ENCODE measurements at regions of chr19 and their contacts with region 1.

Region 1: DNA sequence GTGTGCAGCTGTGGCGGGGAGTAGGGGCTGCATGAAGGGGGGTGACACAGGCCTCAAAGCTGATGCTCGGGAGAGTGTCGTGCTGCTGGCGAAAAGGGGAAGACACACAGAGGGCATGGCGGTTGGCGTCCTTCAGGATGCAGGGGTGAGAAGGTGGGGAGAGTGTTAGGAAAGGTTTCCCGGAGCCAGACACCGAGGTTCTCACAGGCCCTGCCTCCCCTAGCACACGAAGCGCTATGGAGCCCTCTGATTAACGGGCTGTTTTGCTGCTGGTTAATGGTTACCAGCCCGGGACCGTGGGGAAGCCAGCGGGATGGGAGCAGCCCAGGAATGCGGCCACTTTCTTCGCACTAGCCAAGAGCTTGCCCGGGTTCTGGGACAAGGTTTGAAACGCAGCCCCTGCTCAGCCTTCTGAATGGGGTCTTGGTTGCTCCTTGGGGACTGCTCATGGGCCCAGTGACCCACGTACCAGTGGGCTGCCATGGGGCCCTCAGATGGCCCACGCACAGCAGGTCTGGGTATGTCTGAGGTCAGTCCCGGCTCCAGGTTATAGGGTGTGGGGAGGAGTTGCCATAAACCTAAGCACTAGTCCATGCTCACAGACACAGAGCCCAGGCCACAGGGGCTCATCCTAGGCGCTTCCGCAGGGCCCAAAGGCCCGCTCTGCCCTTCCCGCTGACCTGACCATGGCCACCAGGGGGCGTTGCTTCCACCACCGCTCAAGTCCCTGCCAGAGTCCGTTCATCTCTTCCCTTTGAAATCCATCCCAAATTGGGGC is 31.3 kb upstream of the ISYNA1 start:
- DNase-seq: no peak
- H3K4me3 ChIP-seq: no peak overlapping the region
- H3K27ac ChIP-seq: peak overlapping the region; percentile 74
- H3K4me1 ChIP-seq: peaks cover 70% of the 10 kb centered on the region
- H3K27me3 ChIP-seq: no peaks in the 10 kb centered on the region
- CTCF ChIP-seq: peak; percentile 28 to 69 (median 58)
- POLR2A ChIP-seq: no peak

Region 2: GRCh38 chr19:18521885-18522624 is 52.8 kb after region 1 on chr19 and contains the start of gene ELL:
- intact Hi-C with region 1: loop called (anchors 10 kb)
- DNase-seq: peak; percentile 100
- H3K4me3 ChIP-seq: peak within 1 kb of the TSS; percentile 95 to 100
- H3K27ac ChIP-seq: peak within 1 kb of the TSS; percentile 99
- H3K4me1 ChIP-seq: peaks cover 37% of the 10 kb centered on the region
- H3K27me3 ChIP-seq: no peaks in the 10 kb centered on the region
- CTCF ChIP-seq: no peak
- POLR2A ChIP-seq: peak in 1 of 2 donors; percentile 95
- total RNA-seq, gene ELL: 25.3 TPM

Region 3: GRCh38 chr19:18557474-18558201 is 88.4 kb after region 1 on chr19 and contains the start of gene KXD1:
- intact Hi-C with region 1: no loop called
- DNase-seq: peak in 1 of 2 donors; percentile 98
- H3K4me3 ChIP-seq: peak within 1 kb of the TSS; percentile 88 to 98
- H3K27ac ChIP-seq: peak within 1 kb of the TSS; percentile 98
- H3K4me1 ChIP-seq: peaks cover 35% of the 10 kb centered on the region
- H3K27me3 ChIP-seq: no peaks in the 10 kb centered on the region
- CTCF ChIP-seq: no peak
- POLR2A ChIP-seq: peak in 1 of 2 donors; percentile 63
- total RNA-seq, gene KXD1: 131 TPM

Region 4: DNA sequence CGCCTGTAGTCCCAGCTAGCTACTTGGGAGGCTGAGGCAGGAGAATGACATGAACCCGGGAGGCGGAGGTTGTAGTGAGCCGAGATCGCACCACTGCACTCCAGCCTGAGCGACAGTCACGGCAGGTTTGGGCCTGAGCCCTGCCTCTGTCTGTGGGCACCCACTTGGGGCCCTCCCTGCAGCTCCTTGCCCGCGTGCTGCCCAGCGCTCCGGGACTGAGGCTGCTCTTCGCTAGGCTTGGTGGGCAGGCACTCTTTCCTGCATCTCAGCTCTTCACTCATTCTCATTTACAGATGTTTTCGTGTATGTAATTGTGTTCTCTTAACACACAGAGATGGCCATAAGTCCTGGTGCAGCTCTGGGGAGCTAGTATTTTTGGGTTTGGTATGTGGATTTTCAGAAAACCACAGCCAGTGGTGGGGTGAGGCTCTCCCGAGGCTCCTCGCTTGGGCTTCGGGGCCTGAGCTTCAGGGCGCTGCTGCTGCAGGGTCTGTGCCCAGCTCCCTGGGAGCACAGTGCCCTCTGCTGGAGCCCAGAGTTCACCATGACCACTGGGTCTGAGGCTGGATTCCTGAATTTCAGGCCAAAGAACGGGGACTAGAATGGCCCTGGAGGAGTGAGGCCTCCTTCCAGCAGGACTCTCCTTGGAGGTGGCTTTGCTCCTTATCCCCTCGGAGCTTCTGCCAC is 377.7 kb after region 1 on chr19:
- intact Hi-C with region 1: loop called (anchors 10 kb)
- DNase-seq: no peak
- H3K4me3 ChIP-seq: no peak overlapping the region
- H3K27ac ChIP-seq: peak overlapping the region; percentile 92
- H3K4me1 ChIP-seq: peaks cover 90% of the 10 kb centered on the region
- H3K27me3 ChIP-seq: no peaks in the 10 kb centered on the region
- CTCF ChIP-seq: peak; percentile 43 to 76 (median 58)
- POLR2A ChIP-seq: no peak